AG04450 (cell line): ENCODE measurements at regions of chr21 and their contacts with region 1.

Region 1: GRCh38 chr21:33608559-33608958 is 20.1 kb upstream of the DONSON start:
- DNase-seq: no peak
- H3K4me3 ChIP-seq: no peak overlapping the region
- H3K27ac ChIP-seq: peak overlapping the region; percentile 39
- H3K27me3 ChIP-seq: no peaks in the 10 kb centered on the region
- CTCF ChIP-seq: no peak

Region 2: DNA sequence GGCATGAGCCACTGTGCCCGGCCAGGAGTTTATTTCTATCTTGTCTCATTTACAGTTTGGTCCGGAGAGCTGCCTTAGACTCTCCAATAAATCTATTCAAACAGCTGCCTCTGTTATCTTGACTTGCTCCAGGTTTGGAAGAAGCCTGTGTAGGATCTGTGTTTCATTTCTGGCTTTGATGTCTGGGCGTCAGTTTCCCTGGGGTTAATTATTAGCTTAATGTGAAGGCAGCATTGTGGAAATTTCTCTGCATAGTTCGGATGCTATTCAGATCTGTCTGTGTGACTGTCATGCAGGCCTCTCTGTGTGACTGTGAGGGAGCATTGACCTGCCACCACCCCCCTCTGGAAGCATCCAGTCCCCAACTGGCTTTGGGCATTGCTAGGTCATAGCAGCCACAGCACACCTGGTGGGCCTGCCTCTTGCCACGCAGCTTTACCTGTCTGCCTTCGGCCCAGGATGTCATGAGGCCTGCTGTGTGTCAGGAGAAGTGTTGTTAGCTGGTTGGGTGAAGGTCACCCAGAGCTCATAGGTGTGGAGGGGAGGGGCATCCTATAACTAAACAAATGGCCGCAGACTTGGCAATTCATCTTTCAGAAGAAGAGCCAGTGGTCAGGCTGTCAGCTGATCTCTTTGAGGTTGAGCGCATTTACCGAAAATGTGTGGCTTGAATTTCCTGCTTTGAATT is 195.6 kb before region 1 on chr21:
- CTCF ChIA-PET with region 1: no interaction called
- POLR2A ChIA-PET with region 1: no interaction called
- DNase-seq: no peak
- H3K4me3 ChIP-seq: no peak overlapping the region
- H3K27ac ChIP-seq: no peak overlapping the region
- H3K27me3 ChIP-seq: no peaks in the 10 kb centered on the region
- CTCF ChIP-seq: no peak

Region 3: GRCh38 chr21:33441489-33442477 is 166.8 kb before region 1 on chr21:
- CTCF ChIA-PET with region 1: interaction called, 13 read pairs
- POLR2A ChIA-PET with region 1: no interaction called
- DNase-seq: peak; percentile 51
- H3K4me3 ChIP-seq: no peak overlapping the region
- H3K27ac ChIP-seq: peak overlapping the region; percentile 43
- H3K27me3 ChIP-seq: no peaks in the 10 kb centered on the region
- CTCF ChIP-seq: no peak

Region 4: GRCh38 chr21:33491373-33492102 is 117.0 kb before region 1 on chr21 and contains the start of gene DNAJC28:
- CTCF ChIA-PET with region 1: interaction called, 13 read pairs
- POLR2A ChIA-PET with region 1: no interaction called
- DNase-seq: peak; percentile 80
- H3K4me3 ChIP-seq: peak within 1 kb of the TSS; percentile 96
- H3K27ac ChIP-seq: no peak within 1 kb of the TSS
- H3K27me3 ChIP-seq: peaks cover 4% of the 10 kb centered on the region
- CTCF ChIP-seq: no peak
- polyA plus RNA-seq, gene DNAJC28: 1.3 and 1.9 TPM in 2 replicates

Region 5: DNA sequence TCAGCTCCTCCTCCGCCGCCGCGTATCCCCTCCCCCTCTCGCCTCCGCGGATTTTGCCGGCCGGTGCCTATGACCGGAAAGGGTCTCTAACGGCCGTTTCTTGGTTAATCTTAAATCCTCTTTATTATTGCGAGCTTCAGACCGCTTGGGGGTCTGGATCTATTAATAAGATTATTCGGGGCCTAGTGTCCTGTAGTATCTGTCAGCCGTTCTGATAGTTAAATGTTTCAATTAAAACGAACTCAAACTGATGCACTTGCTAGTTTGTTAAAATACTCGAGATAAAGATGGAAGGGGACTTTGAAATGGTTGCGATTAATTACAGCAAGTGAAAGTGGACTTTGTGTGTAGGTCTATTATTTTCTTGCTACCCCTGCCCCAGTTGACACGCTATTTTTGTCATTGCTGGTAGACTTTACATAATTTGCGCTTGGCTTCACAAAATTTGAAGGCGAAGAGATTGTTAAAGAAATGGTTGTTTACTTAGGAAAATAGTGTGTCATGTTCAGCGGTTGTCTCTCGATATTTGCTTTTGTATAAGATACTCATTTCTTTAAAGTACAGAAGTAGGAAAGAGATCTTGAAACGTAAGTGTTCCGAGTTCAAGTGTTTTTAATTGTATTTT is 64.9 kb before region 1 on chr21:
- CTCF ChIA-PET with region 1: interaction called, 11 read pairs
- POLR2A ChIA-PET with region 1: no interaction called
- DNase-seq: no peak
- H3K4me3 ChIP-seq: peak overlapping the region; percentile 95
- H3K27ac ChIP-seq: peak overlapping the region; percentile 100
- H3K27me3 ChIP-seq: no peaks in the 10 kb centered on the region
- CTCF ChIP-seq: no peak

Region 6: GRCh38 chr21:33572350-33572749 is 36.2 kb before region 1 on chr21:
- CTCF ChIA-PET with region 1: interaction called, 28 read pairs
- POLR2A ChIA-PET with region 1: no interaction called
- DNase-seq: no peak
- H3K4me3 ChIP-seq: no peak overlapping the region
- H3K27ac ChIP-seq: no peak overlapping the region
- H3K27me3 ChIP-seq: no peaks in the 10 kb centered on the region
- CTCF ChIP-seq: no peak

Region 7: GRCh38 chr21:33598051-33598450 is 10.5 kb before region 1 on chr21:
- CTCF ChIA-PET with region 1: interaction called, 18 read pairs
- POLR2A ChIA-PET with region 1: no interaction called
- DNase-seq: no peak
- H3K4me3 ChIP-seq: no peak overlapping the region
- H3K27ac ChIP-seq: no peak overlapping the region
- H3K27me3 ChIP-seq: no peaks in the 10 kb centered on the region
- CTCF ChIP-seq: no peak

Region 8: DNA sequence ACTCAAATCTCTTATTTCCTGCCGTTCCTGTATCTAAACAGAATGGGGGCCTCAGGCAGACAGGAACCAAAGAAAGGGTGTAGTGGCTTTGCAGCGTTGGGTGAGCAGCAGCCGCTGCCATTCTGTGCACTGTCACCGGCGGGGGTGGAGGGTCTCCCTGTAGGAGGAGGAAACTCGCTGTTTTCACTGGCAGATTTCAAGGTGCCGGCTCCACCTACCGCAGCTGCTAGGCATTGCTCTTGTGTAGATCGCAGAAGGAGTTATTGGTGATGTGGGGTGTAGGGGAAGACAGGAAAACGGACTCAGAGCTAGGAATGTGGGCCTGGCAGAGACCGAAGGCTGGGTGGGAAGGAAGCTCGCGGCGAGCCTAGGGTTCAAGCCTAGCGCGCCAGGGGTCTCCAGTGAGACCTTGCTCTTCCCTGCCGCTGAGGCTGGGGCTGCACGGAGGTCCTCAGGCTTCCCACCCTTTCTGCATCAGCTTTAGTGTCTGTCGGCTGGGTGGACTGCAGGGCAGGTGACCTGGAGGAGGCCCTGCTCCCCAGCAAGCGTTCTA is 286.3 kb after region 1 on chr21:
- CTCF ChIA-PET with region 1: interaction called, 17 read pairs
- POLR2A ChIA-PET with region 1: no interaction called
- DNase-seq: peak; percentile 75
- H3K4me3 ChIP-seq: peak overlapping the region; percentile 46
- H3K27ac ChIP-seq: no peak overlapping the region
- H3K27me3 ChIP-seq: peaks cover 3% of the 10 kb centered on the region
- CTCF ChIP-seq: peak; percentile 88

Region 9: GRCh38 chr21:34100790-34101189 is 492.2 kb after region 1 on chr21:
- CTCF ChIA-PET with region 1: no interaction called
- POLR2A ChIA-PET with region 1: no interaction called
- DNase-seq: no peak
- H3K4me3 ChIP-seq: no peak overlapping the region
- H3K27ac ChIP-seq: no peak overlapping the region
- H3K27me3 ChIP-seq: no peaks in the 10 kb centered on the region
- CTCF ChIP-seq: no peak